ENCODE measurements at regions of chr10 and their contacts with region 1.

Region 1: GRCh38 chr10:13776861-13777311 is 190.1 kb downstream of the PRPF18 start:
- DNase-seq: no peak
- ATAC-seq: peak; percentile 67
- H3K4me3 ChIP-seq: no peak overlapping the region
- H3K4me3 Mint-ChIP-seq: peak overlapping the region; percentile 26
- H3K27ac ChIP-seq: no peak overlapping the region
- H3K27ac Mint-ChIP-seq: no peak overlapping the region
- H3K4me1 ChIP-seq: peaks cover 10 to 13% of the 10 kb centered on the region in 2 donors
- H3K4me1 Mint-ChIP-seq: peaks cover 42% of the 10 kb centered on the region
- H3K27me3 ChIP-seq: peaks cover 0 to 12% (median 3%) of the 10 kb centered on the region in 4 experiments
- H3K27me3 Mint-ChIP-seq: peaks cover 25% of the 10 kb centered on the region
- CTCF ChIP-seq: no peak

Region 2: GRCh38 chr10:13633689-13634088 is 143.2 kb before region 1 on chr10:
- CTCF ChIA-PET with region 1: no interaction called
- POLR2A ChIA-PET with region 1: no interaction called
- intact Hi-C with region 1: no loop called
- DNase-seq: no peak
- ATAC-seq: no peak
- H3K4me3 ChIP-seq: no peak overlapping the region
- H3K4me3 Mint-ChIP-seq: no peak overlapping the region
- H3K27ac ChIP-seq: no peak overlapping the region
- H3K27ac Mint-ChIP-seq: no peak overlapping the region
- H3K4me1 ChIP-seq: no peaks in the 10 kb centered on the region
- H3K4me1 Mint-ChIP-seq: peaks cover 8% of the 10 kb centered on the region
- H3K27me3 ChIP-seq: no peaks in the 10 kb centered on the region
- H3K27me3 Mint-ChIP-seq: no peaks in the 10 kb centered on the region
- CTCF ChIP-seq: no peak

Region 3: GRCh38 chr10:13659897-13660550 is 116.9 kb before region 1 on chr10:
- CTCF ChIA-PET with region 1: interaction called, 39 read pairs
- POLR2A ChIA-PET with region 1: no interaction called
- intact Hi-C with region 1: no loop called
- DNase-seq: peak; percentile 75
- ATAC-seq: peak; percentile 67
- H3K4me3 ChIP-seq: no peak overlapping the region
- H3K4me3 Mint-ChIP-seq: no peak overlapping the region
- H3K27ac ChIP-seq: no peak overlapping the region
- H3K27ac Mint-ChIP-seq: peak overlapping the region; percentile 26
- H3K4me1 ChIP-seq: peaks cover 7 to 16% of the 10 kb centered on the region in 2 donors
- H3K4me1 Mint-ChIP-seq: peaks cover 9% of the 10 kb centered on the region
- H3K27me3 ChIP-seq: peaks cover 0 to 7% (median 0%) of the 10 kb centered on the region in 4 experiments
- H3K27me3 Mint-ChIP-seq: no peaks in the 10 kb centered on the region
- CTCF ChIP-seq: peak; percentile 89

Region 4: DNA sequence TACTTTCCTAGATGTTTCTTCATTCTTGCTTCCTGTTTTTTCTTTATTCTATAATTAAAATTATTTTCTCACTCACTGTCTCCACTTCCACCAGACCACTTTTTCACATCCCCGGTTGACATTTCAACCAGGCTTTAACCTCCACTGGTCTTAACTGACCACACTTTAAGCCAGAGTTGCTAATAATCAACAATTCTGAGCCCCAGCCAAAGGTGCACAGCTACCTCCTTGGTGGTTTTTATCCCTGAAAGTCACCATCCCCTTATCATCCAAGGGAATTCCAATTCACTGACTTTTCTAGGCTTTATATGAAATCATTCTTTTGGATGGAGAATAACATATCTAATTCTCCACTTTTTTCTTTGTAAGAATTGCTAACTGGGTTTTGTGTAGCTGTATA is 415.0 kb after region 1 on chr10:
- CTCF ChIA-PET with region 1: no interaction called
- POLR2A ChIA-PET with region 1: no interaction called
- intact Hi-C with region 1: no loop called
- DNase-seq: no peak
- ATAC-seq: no peak
- H3K4me3 ChIP-seq: no peak overlapping the region
- H3K4me3 Mint-ChIP-seq: no peak overlapping the region
- H3K27ac ChIP-seq: no peak overlapping the region
- H3K27ac Mint-ChIP-seq: no peak overlapping the region
- H3K4me1 ChIP-seq: peaks cover 4 to 15% of the 10 kb centered on the region in 2 donors
- H3K4me1 Mint-ChIP-seq: peaks cover 7% of the 10 kb centered on the region
- H3K27me3 ChIP-seq: peaks cover 0 to 6% (median 5%) of the 10 kb centered on the region in 4 experiments
- H3K27me3 Mint-ChIP-seq: peaks cover 40% of the 10 kb centered on the region
- CTCF ChIP-seq: no peak

Measured in B cell (primary cell).